CD8-positive, alpha-beta T cell (primary cell): ENCODE measurements at regions of chr2 and their contacts with region 1.

Region 1: DNA sequence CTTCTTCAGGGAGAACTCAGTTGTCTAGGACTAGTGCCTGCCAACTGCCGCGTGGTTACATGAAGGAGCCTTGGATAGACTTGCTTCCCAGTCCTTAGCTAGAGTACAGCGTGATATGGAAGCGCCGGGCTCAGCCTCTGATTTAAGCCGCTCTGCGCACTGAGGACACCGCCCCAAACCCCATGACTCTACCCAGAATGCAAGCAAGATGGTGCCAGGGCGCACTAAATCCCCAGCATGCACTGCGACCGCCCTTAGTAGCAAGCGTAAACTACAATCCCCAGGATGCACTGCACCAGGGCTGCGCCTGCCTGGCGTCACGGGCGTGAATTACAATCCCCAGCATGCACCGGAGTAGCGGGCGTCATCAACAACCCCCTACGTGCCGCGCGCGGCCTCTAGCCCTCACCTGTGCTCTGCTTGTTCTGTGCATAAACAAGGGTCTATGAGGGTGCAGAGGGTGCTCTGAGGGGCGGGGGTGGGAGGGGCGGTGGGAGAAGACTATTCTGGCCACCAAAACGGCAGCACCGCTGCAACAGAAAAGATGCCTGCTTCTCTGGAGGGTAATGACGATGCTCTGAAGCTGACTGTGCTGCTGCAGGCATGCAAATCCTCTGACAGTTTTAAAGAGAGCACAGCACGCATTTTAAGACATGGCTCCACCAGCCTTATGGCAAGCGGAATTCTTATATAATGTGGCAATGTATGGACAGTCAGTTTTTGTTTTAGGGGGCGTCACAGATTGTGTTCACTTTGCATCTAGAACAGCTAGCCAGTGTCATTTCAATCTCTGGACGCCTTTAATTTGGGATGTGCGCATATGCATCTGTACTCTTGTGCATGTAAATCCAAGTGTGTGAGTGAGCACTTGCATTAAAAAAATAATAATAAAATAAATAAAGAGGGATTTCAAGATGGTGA is 282.5 kb upstream of the MYT1L start:
- DNase-seq: peak; percentile 66 to 93 (median 86)
- ATAC-seq: peak; percentile 99
- H3K4me3 ChIP-seq: peak overlapping the region; percentile 38 to 61
- H3K4me3 Mint-ChIP-seq: peak overlapping the region; percentile 82
- H3K27ac ChIP-seq: peak overlapping the region; percentile 25 to 80
- H3K27ac Mint-ChIP-seq: peak overlapping the region; percentile 91
- H3K4me1 ChIP-seq: peaks cover 7% of the 10 kb centered on the region
- H3K4me1 Mint-ChIP-seq: peaks cover 8% of the 10 kb centered on the region
- H3K27me3 ChIP-seq: no peaks in the 10 kb centered on the region
- H3K27me3 Mint-ChIP-seq: peaks cover 9% of the 10 kb centered on the region
- CTCF ChIP-seq: no peak

Region 2: GRCh38 chr2:2646433-2647051 is 33.0 kb after region 1 on chr2:
- CTCF ChIA-PET with region 1: interaction called, 5 read pairs
- POLR2A ChIA-PET with region 1: interaction called, 10 read pairs
- intact Hi-C with region 1: loop called (anchors 1 to 2 kb)
- DNase-seq: peak in 7 of 9 experiments; percentile 19 to 83 (median 63)
- ATAC-seq: peak; percentile 93
- H3K4me3 ChIP-seq: peak overlapping the region in 1 of 2 experiments; percentile 14
- H3K4me3 Mint-ChIP-seq: peak overlapping the region; percentile 77
- H3K27ac ChIP-seq: peak overlapping the region; percentile 50 to 56
- H3K27ac Mint-ChIP-seq: peak overlapping the region; percentile 91
- H3K4me1 ChIP-seq: peaks cover 32% of the 10 kb centered on the region
- H3K4me1 Mint-ChIP-seq: peaks cover 31% of the 10 kb centered on the region
- H3K27me3 ChIP-seq: no peaks in the 10 kb centered on the region
- H3K27me3 Mint-ChIP-seq: no peaks in the 10 kb centered on the region
- CTCF ChIP-seq: no peak

Region 3: DNA sequence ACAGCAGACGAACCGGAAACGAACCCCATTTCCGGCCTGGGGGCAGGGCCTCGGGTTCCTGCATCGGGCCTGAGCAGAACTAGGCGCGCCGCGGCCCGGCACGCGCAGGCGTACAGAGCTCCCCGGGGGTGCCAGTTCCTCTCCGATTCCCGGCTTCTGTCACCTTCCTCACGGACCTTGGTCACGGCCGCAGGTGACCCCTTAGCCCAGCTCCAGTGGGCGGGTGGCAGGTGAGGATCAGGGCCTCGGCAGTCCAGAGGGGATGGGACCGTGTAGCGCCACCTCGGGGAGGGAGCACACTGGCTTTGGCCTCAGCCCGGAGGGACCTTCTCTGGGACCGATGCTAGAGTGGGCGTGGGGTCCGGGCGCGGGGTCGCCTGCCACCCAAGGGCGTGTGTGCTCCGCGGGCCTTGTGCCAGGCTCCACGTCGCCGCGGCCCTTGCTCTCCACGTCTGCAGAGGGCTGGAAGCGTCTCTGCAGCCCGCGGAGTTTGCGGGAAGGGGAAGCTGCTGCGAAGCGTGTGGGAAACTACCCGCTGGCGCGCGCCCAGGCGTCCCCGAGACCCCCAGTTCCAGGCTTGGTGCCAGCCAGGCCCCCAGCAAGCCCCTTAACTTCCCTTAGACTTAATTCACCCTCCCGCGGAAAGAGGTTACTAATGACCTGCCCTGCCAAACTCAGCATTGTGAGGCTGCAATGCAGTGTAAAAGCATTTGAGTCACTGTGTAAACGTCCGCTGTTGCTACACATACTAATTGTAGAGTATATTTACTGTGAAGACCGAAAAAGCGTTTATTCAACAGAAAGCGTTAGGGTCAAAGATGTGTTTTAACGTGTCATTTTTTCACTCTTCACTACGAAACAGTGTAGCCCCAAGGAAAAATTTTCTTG is 766.4 kb after region 1 on chr2 and contains the start of gene TRAPPC12:
- CTCF ChIA-PET with region 1: no interaction called
- POLR2A ChIA-PET with region 1: no interaction called
- intact Hi-C with region 1: loop called in 1 of 2 experiments (anchors 5 kb)
- DNase-seq: peak; percentile 86 to 95 (median 92)
- ATAC-seq: peak; percentile 79
- H3K4me3 ChIP-seq: peak within 1 kb of the TSS; percentile 82 to 88
- H3K4me3 Mint-ChIP-seq: peak within 1 kb of the TSS; percentile 97
- H3K27ac ChIP-seq: peak within 1 kb of the TSS; percentile 95
- H3K27ac Mint-ChIP-seq: peak within 1 kb of the TSS; percentile 99
- H3K4me1 ChIP-seq: peaks cover 29% of the 10 kb centered on the region
- H3K4me1 Mint-ChIP-seq: peaks cover 67% of the 10 kb centered on the region
- H3K27me3 ChIP-seq: no peaks in the 10 kb centered on the region
- H3K27me3 Mint-ChIP-seq: no peaks in the 10 kb centered on the region
- CTCF ChIP-seq: peak; percentile 24
- total RNA-seq, gene TRAPPC12: 33.3 to 35.1 TPM